CD4-positive, alpha-beta T cell (primary cell): ENCODE measurements at regions of chr17 and their contacts with region 1.

Region 1: GRCh38 chr17:81018044-81018802 is 16.7 kb upstream of the BAIAP2 start:
- DNase-seq: peak in 12 of 14 experiments; percentile 22 to 73 (median 38)
- ATAC-seq: peak; percentile 88
- H3K4me3 ChIP-seq: peak overlapping the region; percentile 60
- H3K4me3 Mint-ChIP-seq: peak overlapping the region; percentile 84
- H3K27ac ChIP-seq: peak overlapping the region; percentile 56 to 81
- H3K27ac Mint-ChIP-seq: peak overlapping the region; percentile 93
- H3K4me1 ChIP-seq: peaks cover 34% of the 10 kb centered on the region
- H3K4me1 Mint-ChIP-seq: peaks cover 26% of the 10 kb centered on the region
- H3K27me3 ChIP-seq: no peaks in the 10 kb centered on the region
- H3K27me3 Mint-ChIP-seq: no peaks in the 10 kb centered on the region
- CTCF ChIP-seq: no peak

Region 2: GRCh38 chr17:81002409-81003361 is 15.5 kb before region 1 on chr17:
- CTCF ChIA-PET with region 1: no interaction called
- POLR2A ChIA-PET with region 1: interaction called, 22 read pairs
- intact Hi-C with region 1: no loop called
- DNase-seq: peak in 1 of 14 experiments; percentile 1
- ATAC-seq: no peak
- H3K4me3 ChIP-seq: no peak overlapping the region
- H3K4me3 Mint-ChIP-seq: peak overlapping the region; percentile 58
- H3K27ac ChIP-seq: no peak overlapping the region
- H3K27ac Mint-ChIP-seq: no peak overlapping the region
- H3K4me1 ChIP-seq: peaks cover 16% of the 10 kb centered on the region
- H3K4me1 Mint-ChIP-seq: peaks cover 18% of the 10 kb centered on the region
- H3K27me3 ChIP-seq: peaks cover 20 to 22% of the 10 kb centered on the region in 2 experiments
- H3K27me3 Mint-ChIP-seq: peaks cover 40% of the 10 kb centered on the region
- CTCF ChIP-seq: no peak

Region 3: DNA sequence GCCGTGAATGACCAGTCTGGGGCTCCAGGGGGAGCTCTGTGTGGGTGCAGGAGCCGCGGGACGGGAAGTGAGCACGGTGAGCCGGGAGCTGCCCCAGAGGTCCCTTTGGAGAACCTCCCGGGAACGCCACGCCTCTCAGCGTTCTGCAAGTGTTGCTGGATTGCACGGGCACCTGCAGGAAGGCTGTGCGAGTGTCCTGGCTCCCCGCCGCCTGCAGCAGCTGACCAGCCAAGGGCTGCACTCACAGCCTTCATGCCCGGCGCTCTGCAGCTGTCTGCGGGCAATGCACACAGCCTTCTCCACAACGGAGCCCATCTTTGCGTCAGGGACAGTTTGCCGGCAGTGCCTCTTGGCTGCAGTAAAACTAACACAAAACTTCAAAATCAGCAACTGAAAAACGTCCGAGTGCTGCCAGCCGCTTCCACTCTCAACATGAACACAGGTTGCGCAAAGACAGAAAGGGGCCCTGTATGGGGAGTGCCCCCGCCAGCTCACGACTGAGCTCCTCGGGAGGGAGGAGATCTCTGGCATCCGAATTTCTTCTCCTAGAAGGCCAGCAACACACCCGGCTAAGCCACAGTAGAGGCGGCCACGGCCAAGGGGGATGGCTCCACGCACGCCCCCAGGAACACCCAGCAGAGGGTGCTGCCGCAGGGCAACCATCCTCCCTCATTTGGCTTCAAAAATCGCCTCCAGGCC is 236.9 kb after region 1 on chr17:
- CTCF ChIA-PET with region 1: no interaction called
- POLR2A ChIA-PET with region 1: no interaction called
- intact Hi-C with region 1: no loop called
- DNase-seq: no peak
- ATAC-seq: no peak
- H3K4me3 ChIP-seq: no peak overlapping the region
- H3K4me3 Mint-ChIP-seq: no peak overlapping the region
- H3K27ac ChIP-seq: no peak overlapping the region
- H3K27ac Mint-ChIP-seq: no peak overlapping the region
- H3K4me1 ChIP-seq: no peaks in the 10 kb centered on the region
- H3K4me1 Mint-ChIP-seq: peaks cover 11% of the 10 kb centered on the region
- H3K27me3 ChIP-seq: no peaks in the 10 kb centered on the region
- H3K27me3 Mint-ChIP-seq: no peaks in the 10 kb centered on the region
- CTCF ChIP-seq: no peak